ENCODE measurements at regions of chr3 and their contacts with region 1.

Region 1: DNA sequence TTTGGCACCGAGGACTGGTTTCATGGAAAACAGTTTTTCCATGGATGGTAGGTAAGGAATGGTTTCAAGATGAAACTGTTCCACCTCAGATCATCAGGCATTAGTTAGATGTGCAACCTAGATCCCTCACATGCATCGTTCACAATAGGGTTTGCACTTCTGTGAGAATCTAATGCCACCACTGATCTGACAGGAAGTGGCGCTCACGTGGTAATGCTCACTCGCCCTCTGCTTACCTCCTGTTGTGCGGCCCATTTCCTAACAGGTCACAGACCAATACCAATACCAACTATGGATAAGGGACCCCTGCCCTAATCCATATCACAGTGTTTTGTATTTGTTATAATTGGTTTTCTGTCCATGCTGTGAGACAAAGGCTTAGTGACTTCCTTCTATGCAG is 58.9 kb downstream of the SLMAP start:
- DNase-seq: peak in 4 of 5 donors; percentile 28 to 44 (median 34)
- H3K4me3 ChIP-seq: peak overlapping the region in 1 of 2 donors; percentile 5
- H3K4me3 Mint-ChIP-seq: peak overlapping the region in 7 of 8 donors; percentile 5 to 79 (median 72)
- H3K27ac ChIP-seq: peak overlapping the region; percentile 3
- H3K27ac Mint-ChIP-seq: peak overlapping the region; percentile 14 to 82 (median 42)
- H3K4me1 ChIP-seq: peaks cover 20% of the 10 kb centered on the region
- H3K4me1 Mint-ChIP-seq: peaks cover 28 to 40% (median 33%) of the 10 kb centered on the region in 4 donors
- H3K27me3 ChIP-seq: no peaks in the 10 kb centered on the region
- H3K27me3 Mint-ChIP-seq: no peaks in the 10 kb centered on the region

Region 2: GRCh38 chr3:57826245-57826951 is 11.4 kb after region 1 on chr3:
- CTCF ChIA-PET with region 1: interaction called, 11 read pairs
- POLR2A ChIA-PET with region 1: no interaction called
- intact Hi-C with region 1: no loop called
- DNase-seq: no peak
- H3K4me3 ChIP-seq: no peak overlapping the region
- H3K4me3 Mint-ChIP-seq: no peak overlapping the region
- H3K27ac ChIP-seq: no peak overlapping the region
- H3K27ac Mint-ChIP-seq: peak overlapping the region in 1 of 7 donors; percentile 71
- H3K4me1 ChIP-seq: no peaks in the 10 kb centered on the region
- H3K4me1 Mint-ChIP-seq: peaks cover 7 to 27% (median 10%) of the 10 kb centered on the region in 4 donors
- H3K27me3 ChIP-seq: no peaks in the 10 kb centered on the region
- H3K27me3 Mint-ChIP-seq: no peaks in the 10 kb centered on the region

Region 3: GRCh38 chr3:58093573-58094195 is 278.6 kb after region 1 on chr3:
- CTCF ChIA-PET with region 1: no interaction called
- POLR2A ChIA-PET with region 1: no interaction called
- intact Hi-C with region 1: no loop called
- DNase-seq: no peak
- H3K4me3 ChIP-seq: no peak overlapping the region
- H3K4me3 Mint-ChIP-seq: no peak overlapping the region
- H3K27ac ChIP-seq: no peak overlapping the region
- H3K27ac Mint-ChIP-seq: no peak overlapping the region
- H3K4me1 ChIP-seq: no peaks in the 10 kb centered on the region
- H3K4me1 Mint-ChIP-seq: no peaks in the 10 kb centered on the region
- H3K27me3 ChIP-seq: no peaks in the 10 kb centered on the region
- H3K27me3 Mint-ChIP-seq: no peaks in the 10 kb centered on the region

Measured in CD4-positive, alpha-beta memory T cell (primary cell).